BJ (cell line): ENCODE measurements at regions of chrX and their contacts with region 1.

Region 1: DNA sequence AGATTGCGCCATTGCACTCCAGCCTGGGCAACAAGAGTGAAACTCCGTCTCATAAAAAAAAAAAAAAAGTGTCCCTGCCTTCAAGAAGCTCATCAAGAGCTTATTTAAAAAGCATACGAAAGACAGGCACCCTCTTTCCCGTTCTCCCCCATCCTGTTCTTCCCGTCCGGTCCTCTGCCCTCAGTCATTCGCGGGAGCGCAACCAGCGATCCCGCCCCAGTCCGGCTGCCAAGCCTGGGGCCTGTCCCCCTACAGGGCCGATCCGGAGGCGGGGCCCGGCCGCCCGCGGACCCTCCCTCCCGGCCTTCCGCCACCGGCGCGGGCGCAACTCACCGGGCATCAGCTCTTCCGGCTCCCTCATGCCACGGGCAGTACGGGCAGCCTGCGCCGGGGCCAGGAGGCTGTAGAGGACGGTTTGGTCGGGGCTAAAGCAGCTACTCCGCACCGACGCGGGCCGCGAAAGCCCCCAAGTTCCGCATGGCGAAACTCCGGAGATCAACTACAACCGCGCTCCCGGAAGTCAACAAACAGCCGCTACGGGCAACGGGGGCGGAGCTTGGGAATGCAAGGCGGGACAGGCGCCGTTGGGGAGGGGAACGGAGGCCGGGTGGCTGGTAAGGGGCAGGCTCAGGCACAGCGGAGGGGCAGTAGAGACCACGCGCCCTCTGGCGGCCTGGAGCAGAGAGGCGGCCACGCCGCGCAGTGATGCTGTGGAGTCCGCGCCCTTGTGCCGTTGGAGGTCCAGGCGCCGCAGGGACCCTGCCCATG is at the start of gene RPGR:
- DNase-seq: peak; percentile 45
- H3K4me3 ChIP-seq: peak within 1 kb of the TSS; percentile 80
- H3K27me3 ChIP-seq: no peaks in the 10 kb centered on the region
- CTCF ChIP-seq: peak; percentile 86
- polyA plus RNA-seq, gene RPGR: 0.93 and 1.8 TPM in 2 replicates

Region 2: GRCh38 chrX:37926700-37927099 is 400.5 kb before region 1 on chrX:
- CTCF ChIA-PET with region 1: interaction called, 11 read pairs
- POLR2A ChIA-PET with region 1: no interaction called
- DNase-seq: no peak
- H3K4me3 ChIP-seq: no peak overlapping the region
- H3K27me3 ChIP-seq: no peaks in the 10 kb centered on the region
- CTCF ChIP-seq: peak; percentile 41

Region 3: DNA sequence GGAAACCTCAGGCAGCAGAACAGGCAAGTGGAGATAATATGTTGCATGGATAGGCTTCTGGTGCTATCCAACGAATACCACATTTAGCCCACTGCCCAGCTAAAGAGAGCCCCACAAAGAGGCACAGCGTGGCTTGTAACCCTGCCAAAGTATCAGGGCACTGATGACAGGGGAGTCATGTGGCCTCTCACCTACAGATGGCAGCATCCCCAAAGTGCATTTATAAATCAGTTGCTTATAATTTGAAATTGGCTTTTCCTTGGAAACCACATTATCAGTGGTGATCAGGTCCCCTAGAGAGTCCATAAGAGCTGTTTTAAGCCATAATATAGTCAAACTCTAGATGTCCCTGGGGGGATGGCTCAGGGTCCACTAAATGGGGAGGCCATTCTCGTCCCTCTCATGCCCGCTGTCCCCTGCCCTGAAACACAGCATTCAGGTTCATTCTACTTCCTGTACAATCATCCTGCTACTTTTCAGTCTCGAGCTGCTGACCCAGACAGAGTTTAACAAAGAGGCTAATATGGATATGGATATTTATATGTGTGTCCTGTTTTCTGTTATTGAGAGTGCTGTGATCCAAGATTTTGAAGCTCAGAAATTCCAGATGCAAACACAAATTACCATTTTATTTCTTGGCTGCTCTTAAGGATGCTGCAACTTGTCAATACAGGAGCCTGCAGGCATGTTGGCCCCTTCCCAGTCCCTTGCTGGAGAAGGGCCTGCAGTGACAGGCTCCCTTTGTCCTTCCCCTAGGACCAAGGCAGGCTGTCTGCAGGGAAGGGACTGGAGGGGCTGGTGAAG is 135.0 kb before region 1 on chrX:
- CTCF ChIA-PET with region 1: interaction called, 14 read pairs
- POLR2A ChIA-PET with region 1: no interaction called
- DNase-seq: no peak
- H3K4me3 ChIP-seq: no peak overlapping the region
- H3K27me3 ChIP-seq: no peaks in the 10 kb centered on the region
- CTCF ChIP-seq: peak; percentile 51